ENCODE measurements at regions of chr10 and their contacts with region 1.

Region 1: GRCh38 chr10:31083765-31084184 is 52.1 kb upstream of the ZNF438 start:
- DNase-seq: peak; percentile 79
- H3K4me3 ChIP-seq: no peak overlapping the region
- H3K27ac ChIP-seq: no peak overlapping the region
- H3K4me1 ChIP-seq: no peaks in the 10 kb centered on the region
- H3K27me3 ChIP-seq: no peaks in the 10 kb centered on the region
- CTCF ChIP-seq: peak; percentile 73

Region 2: GRCh38 chr10:30877111-30877510 is 206.7 kb before region 1 on chr10:
- CTCF ChIA-PET with region 1: no interaction called
- POLR2A ChIA-PET with region 1: no interaction called
- intact Hi-C with region 1: no loop called
- DNase-seq: no peak
- H3K4me3 ChIP-seq: no peak overlapping the region
- H3K27ac ChIP-seq: no peak overlapping the region
- H3K4me1 ChIP-seq: no peaks in the 10 kb centered on the region
- H3K27me3 ChIP-seq: no peaks in the 10 kb centered on the region
- CTCF ChIP-seq: no peak

Region 3: DNA sequence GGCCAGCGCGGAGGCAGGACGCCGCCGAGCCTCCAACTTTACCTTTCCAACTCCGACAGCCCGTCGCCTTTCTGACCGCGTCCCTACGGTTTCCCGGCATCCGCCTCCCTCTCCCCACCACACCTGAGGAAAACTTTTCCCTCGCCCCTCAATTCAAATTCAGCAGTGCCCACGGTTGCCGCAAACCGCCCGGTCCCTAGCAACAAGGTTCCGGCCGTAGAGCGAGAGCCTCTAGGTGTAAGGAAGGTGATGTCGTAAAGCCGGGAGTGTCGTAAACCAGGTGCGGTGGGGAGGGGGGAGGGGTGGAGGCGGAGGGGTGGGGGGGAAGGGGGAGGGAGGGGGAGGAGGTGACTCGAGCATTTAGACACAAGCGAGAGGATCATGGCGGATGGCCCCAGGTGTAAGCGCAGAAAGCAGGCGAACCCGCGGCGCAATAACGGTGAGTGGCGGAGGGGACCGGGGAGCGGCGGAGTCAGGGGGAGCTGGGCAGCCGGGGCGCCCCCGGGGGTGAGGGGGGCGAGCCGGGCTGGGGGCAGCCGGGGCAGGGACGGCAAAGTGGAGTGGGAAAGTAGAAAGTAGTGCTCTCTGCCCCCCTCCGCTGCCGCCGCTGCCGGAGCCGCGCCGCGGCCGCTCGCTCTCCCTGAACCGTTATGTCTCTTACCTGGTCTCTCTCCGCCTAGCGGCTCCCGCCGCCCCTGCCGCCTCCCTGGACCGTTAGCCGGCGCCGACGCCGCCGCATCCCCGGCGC is 235.3 kb after region 1 on chr10 and contains the start of gene ZEB1:
- CTCF ChIA-PET with region 1: no interaction called
- POLR2A ChIA-PET with region 1: no interaction called
- intact Hi-C with region 1: loop called (anchors 5 kb)
- DNase-seq: peak; percentile 86
- H3K4me3 ChIP-seq: peak within 1 kb of the TSS; percentile 68
- H3K27ac ChIP-seq: peak within 1 kb of the TSS; percentile 21
- H3K4me1 ChIP-seq: peaks cover 15% of the 10 kb centered on the region
- H3K27me3 ChIP-seq: peaks cover 43% of the 10 kb centered on the region
- CTCF ChIP-seq: 0 out of 2 replicates have a peak, but pooled peaks have one; percentile 22
- total RNA-seq, gene ZEB1: 8.3 and 10.3 TPM in 2 replicates